MCF 10A (cell line): ENCODE measurements at regions of chr19 and their contacts with region 1.

Region 1: GRCh38 chr19:44653977-44654774 is 10.5 kb downstream of the PVR start:
- DNase-seq: peak; percentile 83
- H3K4me3 Mint-ChIP-seq: no peak overlapping the region
- H3K27ac Mint-ChIP-seq: no peak overlapping the region
- H3K4me1 Mint-ChIP-seq: peaks cover 24% of the 10 kb centered on the region
- H3K27me3 Mint-ChIP-seq: no peaks in the 10 kb centered on the region
- CTCF ChIP-seq: peak; percentile 56

Region 2: DNA sequence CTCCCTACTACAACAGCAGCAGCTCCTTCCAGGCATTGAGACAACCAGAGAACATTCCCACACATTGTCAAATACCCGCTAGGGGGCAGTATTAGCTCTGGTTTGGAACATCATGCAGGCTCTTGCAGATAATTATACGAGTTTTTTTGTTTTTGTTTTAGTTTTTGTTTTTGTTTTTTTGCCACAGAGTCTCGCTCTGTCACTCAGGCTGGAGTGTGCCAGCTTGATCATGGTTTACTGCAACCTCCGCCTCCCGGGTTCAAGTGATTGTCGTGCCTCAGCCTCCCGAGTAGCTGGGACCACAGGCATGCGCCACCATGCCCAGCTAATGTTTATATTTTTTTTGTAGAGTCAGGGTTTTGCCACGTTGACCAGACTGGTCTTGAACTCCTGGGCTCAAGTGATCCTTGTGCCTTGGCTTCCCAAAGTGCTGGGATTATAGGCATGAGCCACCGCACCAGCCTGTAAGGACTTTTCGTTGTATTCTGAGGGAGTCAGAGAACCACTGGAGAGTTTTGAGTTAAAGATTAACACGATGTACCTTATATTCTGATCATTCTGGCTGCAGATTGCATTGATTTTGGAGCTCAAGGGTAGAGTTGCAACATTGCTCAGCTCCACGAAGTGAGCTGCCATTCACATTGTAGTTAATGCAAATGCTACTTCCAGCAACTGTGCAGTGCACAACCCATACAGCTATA is 83.0 kb before region 1 on chr19:
- CTCF ChIA-PET with region 1: interaction called, 82 read pairs
- POLR2A ChIA-PET with region 1: interaction called, 3 read pairs
- intact Hi-C with region 1: no loop called
- DNase-seq: peak; percentile 90
- H3K4me3 Mint-ChIP-seq: no peak overlapping the region
- H3K27ac Mint-ChIP-seq: no peak overlapping the region
- H3K4me1 Mint-ChIP-seq: peaks cover 6% of the 10 kb centered on the region
- H3K27me3 Mint-ChIP-seq: peaks cover 30% of the 10 kb centered on the region
- CTCF ChIP-seq: peak; percentile 78

Region 3: DNA sequence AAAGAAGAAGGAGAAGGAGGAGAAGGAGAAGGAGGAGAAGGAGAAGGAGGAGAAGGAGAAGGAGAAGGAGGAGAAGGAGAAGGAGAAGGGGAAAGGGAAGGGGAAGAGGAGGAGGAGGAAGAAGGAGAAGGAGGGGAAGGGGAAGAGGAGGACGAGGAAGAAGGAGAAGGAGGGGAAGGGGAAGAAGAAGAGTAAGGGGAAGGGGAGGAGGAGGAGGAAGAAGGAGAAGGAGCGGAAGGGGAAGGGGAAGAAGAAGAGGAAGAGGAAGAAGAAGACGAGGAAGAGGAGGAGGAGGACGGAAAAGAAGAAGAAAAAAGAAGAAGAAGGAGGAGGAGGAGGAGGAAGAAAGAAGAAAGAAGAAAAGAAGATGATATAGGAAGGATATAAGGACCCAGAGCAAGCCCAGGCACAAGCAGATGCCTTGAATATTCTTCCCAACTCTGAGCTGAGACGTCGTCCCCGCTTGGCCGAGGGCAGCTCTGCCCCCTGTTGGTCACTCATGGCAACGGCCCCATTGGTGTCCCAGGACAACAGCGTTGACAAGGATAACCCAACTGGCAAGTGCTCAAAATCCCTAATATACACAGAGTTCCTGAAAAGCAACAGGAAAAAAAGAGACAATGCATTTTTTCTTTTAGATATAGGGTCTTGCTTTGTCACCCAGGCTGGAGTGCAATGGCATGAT is 71.5 kb before region 1 on chr19:
- CTCF ChIA-PET with region 1: interaction called, 82 read pairs
- POLR2A ChIA-PET with region 1: interaction called, 3 read pairs
- intact Hi-C with region 1: no loop called
- DNase-seq: peak; percentile 55
- H3K4me3 Mint-ChIP-seq: no peak overlapping the region
- H3K27ac Mint-ChIP-seq: no peak overlapping the region
- H3K4me1 Mint-ChIP-seq: peaks cover 12% of the 10 kb centered on the region
- H3K27me3 Mint-ChIP-seq: no peaks in the 10 kb centered on the region
- CTCF ChIP-seq: peak; percentile 56

Region 4: GRCh38 chr19:44626048-44626624 is 28.0 kb before region 1 on chr19:
- CTCF ChIA-PET with region 1: interaction called, 14 read pairs
- POLR2A ChIA-PET with region 1: interaction called, 5 read pairs
- intact Hi-C with region 1: no loop called
- DNase-seq: peak; percentile 97
- H3K4me3 Mint-ChIP-seq: peak overlapping the region; percentile 5
- H3K27ac Mint-ChIP-seq: peak overlapping the region; percentile 76
- H3K4me1 Mint-ChIP-seq: peaks cover 17% of the 10 kb centered on the region
- H3K27me3 Mint-ChIP-seq: no peaks in the 10 kb centered on the region
- CTCF ChIP-seq: no peak

Region 5: GRCh38 chr19:44689056-44689895 is 35.1 kb after region 1 on chr19:
- CTCF ChIA-PET with region 1: interaction called, 10 read pairs
- POLR2A ChIA-PET with region 1: no interaction called
- intact Hi-C with region 1: no loop called
- DNase-seq: peak; percentile 61
- H3K4me3 Mint-ChIP-seq: no peak overlapping the region
- H3K27ac Mint-ChIP-seq: no peak overlapping the region
- H3K4me1 Mint-ChIP-seq: peaks cover 25% of the 10 kb centered on the region
- H3K27me3 Mint-ChIP-seq: no peaks in the 10 kb centered on the region
- CTCF ChIP-seq: peak; percentile 94

Region 6: GRCh38 chr19:45264781-45265317 is 610.7 kb after region 1 on chr19:
- CTCF ChIA-PET with region 1: no interaction called
- POLR2A ChIA-PET with region 1: no interaction called
- intact Hi-C with region 1: no loop called
- DNase-seq: no peak
- H3K4me3 Mint-ChIP-seq: no peak overlapping the region
- H3K27ac Mint-ChIP-seq: no peak overlapping the region
- H3K4me1 Mint-ChIP-seq: no peaks in the 10 kb centered on the region
- H3K27me3 Mint-ChIP-seq: no peaks in the 10 kb centered on the region
- CTCF ChIP-seq: no peak